PC-9 (cell line): ENCODE measurements at regions of chr16 and their contacts with region 1.

Region 1: GRCh38 chr16:58000706-58001676 is at the start of gene USB1:
- DNase-seq: peak; percentile 76 to 85
- H3K4me3 ChIP-seq: peak within 1 kb of the TSS; percentile 89
- H3K27ac ChIP-seq: no peak within 1 kb of the TSS
- H3K4me1 ChIP-seq: peaks cover 27% of the 10 kb centered on the region
- H3K27me3 ChIP-seq: no peaks in the 10 kb centered on the region
- CTCF ChIP-seq: peak; percentile 67
- total RNA-seq, gene USB1: 65.8 and 66.0 TPM in 2 replicates

Region 2: GRCh38 chr16:57447186-57447962 is 553.6 kb before region 1 on chr16 and contains the starts of genes CIAPIN1 and COQ9:
- CTCF ChIA-PET with region 1: interaction called, 18 read pairs
- POLR2A ChIA-PET with region 1: no interaction called
- intact Hi-C with region 1: no loop called
- DNase-seq: peak; percentile 86 to 88
- H3K4me3 ChIP-seq: peak within 1 kb of the TSS; percentile 87
- H3K27ac ChIP-seq: peak within 1 kb of the TSS; percentile 53
- H3K4me1 ChIP-seq: peaks cover 14% of the 10 kb centered on the region
- H3K27me3 ChIP-seq: no peaks in the 10 kb centered on the region
- CTCF ChIP-seq: no peak
- total RNA-seq, gene CIAPIN1: 51.4 and 56.4 TPM in 2 replicates
- total RNA-seq, gene COQ9: 53.5 and 58.3 TPM in 2 replicates

Region 3: DNA sequence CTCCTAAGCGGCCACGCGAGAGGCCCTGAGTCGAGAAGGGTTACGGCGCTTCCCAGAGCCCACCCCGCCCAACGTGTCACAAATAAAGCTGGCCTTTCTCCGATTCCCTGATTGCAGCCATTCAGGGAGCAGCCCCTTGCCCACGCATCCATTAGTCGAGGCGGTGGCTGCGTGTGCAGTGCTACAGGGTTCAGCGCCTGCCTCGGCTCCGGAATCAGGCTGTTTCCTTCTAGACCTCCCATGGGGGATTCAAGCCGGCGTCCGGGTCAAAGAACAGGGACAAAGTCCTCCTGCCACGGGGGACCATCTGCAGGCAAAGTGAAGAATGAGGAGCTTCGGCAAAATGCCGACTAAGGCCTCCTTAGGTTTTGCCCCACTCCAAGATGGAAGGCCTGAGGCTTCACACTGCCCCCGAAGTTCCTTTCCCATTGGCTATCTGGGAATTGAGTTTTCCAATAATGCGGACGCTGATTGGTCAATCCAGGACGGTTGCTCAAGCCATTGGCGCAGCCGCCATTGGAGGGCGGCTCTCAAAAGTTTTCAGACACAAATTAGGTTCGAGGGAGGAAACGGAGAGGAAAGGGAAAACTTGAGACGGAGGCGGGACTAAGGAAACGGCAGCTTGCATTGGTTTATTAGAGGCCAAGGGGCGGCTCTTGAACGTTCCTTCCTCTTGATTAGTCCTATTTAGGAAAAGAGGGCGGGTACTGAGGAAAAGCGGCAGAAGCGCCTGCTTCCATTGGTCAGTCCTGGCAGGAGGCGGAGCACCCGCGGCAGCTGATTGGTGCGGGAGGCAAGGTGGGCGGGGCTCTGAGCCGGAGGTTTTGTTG is 265.9 kb before region 1 on chr16:
- CTCF ChIA-PET with region 1: interaction called, 8 read pairs
- POLR2A ChIA-PET with region 1: no interaction called
- intact Hi-C with region 1: loop called (anchors 1 kb)
- DNase-seq: peak; percentile 96 to 100
- H3K4me3 ChIP-seq: peak overlapping the region; percentile 90
- H3K27ac ChIP-seq: peak overlapping the region; percentile 64
- H3K4me1 ChIP-seq: peaks cover 18% of the 10 kb centered on the region
- H3K27me3 ChIP-seq: no peaks in the 10 kb centered on the region
- CTCF ChIP-seq: no peak

Region 4: DNA sequence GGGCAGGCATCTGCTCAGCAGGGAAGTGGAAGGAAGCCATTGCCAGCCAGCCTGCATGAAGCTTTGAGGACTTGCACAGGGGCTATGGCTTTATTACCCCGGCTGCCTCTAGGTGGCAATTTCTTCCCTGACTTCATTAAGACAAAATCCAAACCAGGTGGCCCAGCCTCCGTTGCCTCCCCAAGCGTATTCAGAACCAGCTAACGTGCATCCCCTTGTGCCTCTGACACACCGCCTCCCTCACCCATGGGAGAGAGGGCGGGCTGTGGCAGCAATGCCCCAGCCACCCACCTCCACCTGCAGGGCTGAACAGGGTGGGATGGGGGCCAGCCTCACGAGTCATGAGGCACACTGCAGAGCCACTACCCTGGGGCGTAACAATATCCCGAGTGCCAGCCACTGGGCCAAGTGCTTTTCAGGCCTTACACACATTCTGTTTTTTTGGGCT is 205.5 kb before region 1 on chr16:
- CTCF ChIA-PET with region 1: no interaction called
- POLR2A ChIA-PET with region 1: no interaction called
- intact Hi-C with region 1: loop called (anchors 2 kb)
- DNase-seq: peak; percentile 66 to 76
- H3K4me3 ChIP-seq: no peak overlapping the region
- H3K27ac ChIP-seq: peak overlapping the region; percentile 96
- H3K4me1 ChIP-seq: peaks cover 52% of the 10 kb centered on the region
- H3K27me3 ChIP-seq: no peaks in the 10 kb centered on the region
- CTCF ChIP-seq: peak; percentile 59

Region 5: DNA sequence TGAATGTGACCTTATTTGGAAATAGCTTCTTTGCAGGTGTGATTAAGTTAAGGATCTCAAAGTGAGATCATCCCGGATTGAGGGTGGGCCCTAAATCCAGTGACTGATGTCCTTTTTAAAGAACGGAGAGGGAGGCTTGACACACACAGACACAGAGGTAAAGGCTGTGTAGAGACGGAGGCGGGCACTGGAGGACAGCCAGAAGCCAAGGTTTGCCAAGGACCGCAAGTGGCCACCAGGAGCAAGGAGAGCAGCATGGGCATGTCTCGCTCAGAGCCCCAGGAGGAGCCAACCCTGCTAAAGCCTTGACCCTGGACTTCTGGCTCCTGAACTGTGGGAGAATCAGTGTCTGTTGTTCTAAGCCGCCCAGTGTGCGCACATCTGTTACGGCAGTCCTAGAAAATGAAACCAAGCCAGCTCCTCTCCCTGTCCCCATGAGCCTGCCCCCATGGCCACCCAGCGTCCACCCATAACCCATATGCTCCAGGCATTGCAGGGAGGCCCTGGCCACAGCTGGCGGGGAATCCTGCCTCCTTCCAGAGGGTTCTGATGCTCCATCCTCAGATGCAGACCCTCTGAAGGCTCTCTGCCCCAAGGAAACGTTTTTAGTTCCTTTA is 45.3 kb before region 1 on chr16:
- CTCF ChIA-PET with region 1: no interaction called
- POLR2A ChIA-PET with region 1: interaction called, 20 read pairs
- intact Hi-C with region 1: no loop called
- DNase-seq: peak in 1 of 2 experiments; percentile 39
- H3K4me3 ChIP-seq: no peak overlapping the region
- H3K27ac ChIP-seq: no peak overlapping the region
- H3K4me1 ChIP-seq: peaks cover 29% of the 10 kb centered on the region
- H3K27me3 ChIP-seq: no peaks in the 10 kb centered on the region
- CTCF ChIP-seq: no peak

Region 6: GRCh38 chr16:57988929-57989328 is 12.1 kb before region 1 on chr16:
- CTCF ChIA-PET with region 1: no interaction called
- POLR2A ChIA-PET with region 1: no interaction called
- intact Hi-C with region 1: no loop called
- DNase-seq: peak; percentile 51 to 58
- H3K4me3 ChIP-seq: no peak overlapping the region
- H3K27ac ChIP-seq: 0 out of 2 replicates have a peak overlapping the region, but pooled peaks have one; percentile 9
- H3K4me1 ChIP-seq: peaks cover 33% of the 10 kb centered on the region
- H3K27me3 ChIP-seq: no peaks in the 10 kb centered on the region
- CTCF ChIP-seq: no peak